ENCODE measurements at regions of chr1 and their contacts with region 1.

Region 1: GRCh38 chr1:11645670-11646265 is 8.5 kb downstream of the FBXO2 start:
- DNase-seq: peak; percentile 86
- ATAC-seq: peak; percentile 45

Region 2: DNA sequence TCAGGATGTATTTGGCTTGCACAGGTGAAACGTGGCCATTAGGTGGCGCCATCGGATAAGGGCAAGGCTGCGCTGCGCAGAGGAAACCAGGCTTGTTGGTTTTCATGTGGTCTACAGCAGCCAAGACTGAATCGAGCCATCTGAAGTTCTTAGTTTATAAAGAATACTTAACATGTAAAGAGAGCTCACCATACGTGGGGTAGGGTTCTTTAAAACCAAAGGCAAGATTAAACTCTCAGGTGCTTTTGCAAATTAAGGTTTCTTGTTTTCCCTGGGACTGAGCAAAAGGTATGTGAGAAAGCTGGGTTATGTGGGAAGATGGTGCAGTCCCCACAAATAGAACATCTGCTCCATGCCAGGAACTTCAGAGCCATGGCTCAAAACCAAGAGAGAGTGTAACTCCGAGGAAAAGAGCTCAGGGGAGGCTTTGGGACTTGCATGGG is 608.0 kb before region 1 on chr1:
- intact Hi-C with region 1: loop called (anchors 2 kb)
- DNase-seq: peak; percentile 90
- ATAC-seq: peak; percentile 99

Region 3: DNA sequence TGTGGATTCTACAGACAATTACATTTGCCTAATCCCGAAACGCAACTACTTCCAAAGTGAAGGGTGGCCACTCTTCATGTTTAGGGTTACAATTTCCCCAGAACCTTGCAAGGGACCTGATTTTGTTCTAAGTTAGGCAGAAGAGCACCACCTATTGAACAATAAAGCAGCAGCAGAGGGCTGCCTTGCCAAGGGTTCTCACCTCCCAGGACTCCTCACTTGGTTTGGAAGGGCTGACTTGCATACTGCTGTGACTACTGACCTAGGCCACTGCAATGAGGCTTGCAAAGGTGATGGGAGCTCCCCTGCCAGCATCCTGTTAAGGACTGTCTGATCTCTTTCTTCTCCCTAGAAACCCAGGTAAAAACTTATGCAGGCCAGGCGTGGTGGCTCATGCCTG is 397.6 kb before region 1 on chr1:
- intact Hi-C with region 1: loop called (anchors 5 kb)
- DNase-seq: no peak
- ATAC-seq: no peak

Region 4: DNA sequence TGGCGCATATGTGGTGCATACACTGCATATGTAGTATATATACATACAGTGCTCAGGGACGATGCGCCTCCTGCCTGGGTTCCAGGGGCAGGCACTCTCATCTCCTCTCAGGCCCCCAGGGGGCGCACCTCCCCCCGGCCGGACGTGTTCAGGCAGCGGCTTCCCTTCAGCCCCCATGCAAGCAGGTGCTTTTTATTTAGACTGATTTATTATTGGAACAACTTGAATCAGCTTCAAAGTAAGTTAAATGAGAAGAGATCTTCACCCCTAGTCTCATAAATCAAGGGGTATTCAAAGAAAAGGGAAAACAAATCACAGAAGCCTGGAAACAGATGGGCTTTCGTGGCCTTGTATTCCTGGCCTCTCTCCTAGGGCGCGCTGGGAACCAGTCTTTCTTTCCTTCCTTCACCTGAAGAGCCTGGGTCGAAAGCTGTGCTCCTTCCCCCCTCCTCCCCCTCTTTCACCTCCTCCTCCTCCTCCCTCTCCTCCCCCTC is 308.1 kb before region 1 on chr1:
- intact Hi-C with region 1: loop called (anchors 10 kb)
- DNase-seq: peak; percentile 61
- ATAC-seq: peak; percentile 43

Region 5: DNA sequence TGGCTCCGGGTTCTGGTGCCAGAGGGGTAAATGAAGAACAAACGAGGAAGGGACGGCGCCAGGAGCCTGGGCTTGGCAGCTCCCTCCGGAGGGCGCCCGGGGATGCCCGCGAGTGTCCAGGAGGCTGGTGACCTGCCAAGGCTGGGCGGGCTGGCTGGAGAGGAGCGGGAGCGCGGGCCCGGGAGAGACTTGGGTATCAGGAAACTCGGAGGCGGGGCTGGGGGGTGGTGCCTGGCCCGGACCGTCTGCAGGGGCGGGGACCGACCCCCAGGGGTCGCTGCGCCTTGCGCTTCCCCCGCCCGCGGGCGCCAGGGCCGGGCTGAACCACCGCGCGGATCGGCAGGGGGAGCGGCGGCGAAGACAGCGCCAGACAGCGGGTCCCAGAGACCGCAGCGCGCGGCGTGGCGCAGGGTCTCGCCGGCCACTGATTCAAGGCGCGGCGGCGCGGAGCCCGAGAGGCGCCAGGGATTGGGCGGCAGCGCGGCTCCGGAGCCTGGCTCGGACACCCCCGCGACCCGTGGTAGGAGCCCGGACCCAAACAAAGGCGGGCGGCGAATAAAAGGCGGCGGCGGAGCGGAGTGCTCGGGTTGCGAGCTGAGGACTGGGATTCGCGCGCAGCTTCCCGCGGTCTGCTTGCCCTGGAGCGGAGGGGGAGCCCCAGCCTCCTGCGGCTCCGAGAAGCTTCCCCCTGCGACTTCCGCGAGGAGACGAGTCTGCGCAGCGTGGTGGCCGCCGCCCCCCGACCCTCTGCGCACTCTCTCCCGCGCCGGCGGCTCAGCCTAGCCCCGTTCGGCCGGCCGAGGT is 167.0 kb before region 1 on chr1 and contains the start of gene DISP3:
- intact Hi-C with region 1: loop called (anchors 10 kb)
- DNase-seq: peak; percentile 65
- ATAC-seq: peak; percentile 75
- total RNA-seq, gene DISP3: not detected

Region 6: GRCh38 chr1:11719313-11720032 is 73.7 kb after region 1 on chr1:
- intact Hi-C with region 1: loop called (anchors 5 kb)
- DNase-seq: peak; percentile 90
- ATAC-seq: peak; percentile 88

Region 7: GRCh38 chr1:12255918-12256317 is 610.1 kb after region 1 on chr1:
- intact Hi-C with region 1: no loop called
- DNase-seq: no peak
- ATAC-seq: no peak

Measured in Right ventricle myocardium superior (tissue), 1 donor.